ENCODE measurements at regions of chr5 and their contacts with region 1.

Region 1: GRCh38 chr5:72366324-72366976 is 46.3 kb downstream of the PTCD2 start:
- DNase-seq: peak; percentile 72 to 76
- H3K4me3 ChIP-seq: no peak overlapping the region
- H3K27ac ChIP-seq: 0 out of 2 replicates have a peak overlapping the region, but pooled peaks have one; percentile 6
- H3K4me1 ChIP-seq: peaks cover 24% of the 10 kb centered on the region
- H3K27me3 ChIP-seq: no peaks in the 10 kb centered on the region
- CTCF ChIP-seq: peak; percentile 84

Region 2: GRCh38 chr5:72307968-72308852 is 58.2 kb before region 1 on chr5:
- CTCF ChIA-PET with region 1: no interaction called
- POLR2A ChIA-PET with region 1: no interaction called
- intact Hi-C with region 1: no loop called
- DNase-seq: peak; percentile 93 to 97
- H3K4me3 ChIP-seq: peak overlapping the region; percentile 73
- H3K27ac ChIP-seq: peak overlapping the region; percentile 86
- H3K4me1 ChIP-seq: peaks cover 13% of the 10 kb centered on the region
- H3K27me3 ChIP-seq: no peaks in the 10 kb centered on the region
- CTCF ChIP-seq: peak; percentile 77

Region 3: DNA sequence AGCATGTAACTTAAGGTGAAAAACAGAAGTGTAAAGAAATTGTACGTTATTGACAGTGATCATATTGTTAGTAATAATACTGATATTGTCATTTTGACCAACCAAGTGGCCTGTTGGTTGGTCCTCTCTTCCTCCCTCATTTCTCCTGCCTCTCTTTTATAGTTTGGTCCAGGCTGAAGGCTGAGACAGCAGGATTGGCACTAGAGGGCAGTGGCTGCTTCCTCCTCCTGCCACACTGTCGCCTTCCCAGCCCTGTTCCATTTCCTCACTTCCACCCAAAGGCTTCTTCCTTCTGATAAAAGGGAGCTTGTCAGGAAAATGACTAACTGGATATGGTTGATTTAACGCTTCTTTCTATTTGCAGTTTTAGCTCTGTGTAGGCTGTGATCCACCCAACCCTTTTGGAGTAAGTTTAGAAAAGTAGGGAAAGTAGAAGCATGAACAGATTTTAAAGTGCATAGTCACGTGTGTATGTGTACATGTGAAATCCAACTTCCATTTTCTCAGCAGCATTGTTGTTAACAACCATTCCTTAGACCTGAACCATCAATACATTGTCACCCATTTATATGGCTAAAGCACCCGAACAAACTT is 10.6 kb before region 1 on chr5:
- CTCF ChIA-PET with region 1: interaction called, 5 read pairs
- POLR2A ChIA-PET with region 1: interaction called, 11 read pairs
- intact Hi-C with region 1: no loop called
- DNase-seq: no peak
- H3K4me3 ChIP-seq: no peak overlapping the region
- H3K27ac ChIP-seq: no peak overlapping the region
- H3K4me1 ChIP-seq: no peaks in the 10 kb centered on the region
- H3K27me3 ChIP-seq: no peaks in the 10 kb centered on the region
- CTCF ChIP-seq: peak; percentile 50

Region 4: DNA sequence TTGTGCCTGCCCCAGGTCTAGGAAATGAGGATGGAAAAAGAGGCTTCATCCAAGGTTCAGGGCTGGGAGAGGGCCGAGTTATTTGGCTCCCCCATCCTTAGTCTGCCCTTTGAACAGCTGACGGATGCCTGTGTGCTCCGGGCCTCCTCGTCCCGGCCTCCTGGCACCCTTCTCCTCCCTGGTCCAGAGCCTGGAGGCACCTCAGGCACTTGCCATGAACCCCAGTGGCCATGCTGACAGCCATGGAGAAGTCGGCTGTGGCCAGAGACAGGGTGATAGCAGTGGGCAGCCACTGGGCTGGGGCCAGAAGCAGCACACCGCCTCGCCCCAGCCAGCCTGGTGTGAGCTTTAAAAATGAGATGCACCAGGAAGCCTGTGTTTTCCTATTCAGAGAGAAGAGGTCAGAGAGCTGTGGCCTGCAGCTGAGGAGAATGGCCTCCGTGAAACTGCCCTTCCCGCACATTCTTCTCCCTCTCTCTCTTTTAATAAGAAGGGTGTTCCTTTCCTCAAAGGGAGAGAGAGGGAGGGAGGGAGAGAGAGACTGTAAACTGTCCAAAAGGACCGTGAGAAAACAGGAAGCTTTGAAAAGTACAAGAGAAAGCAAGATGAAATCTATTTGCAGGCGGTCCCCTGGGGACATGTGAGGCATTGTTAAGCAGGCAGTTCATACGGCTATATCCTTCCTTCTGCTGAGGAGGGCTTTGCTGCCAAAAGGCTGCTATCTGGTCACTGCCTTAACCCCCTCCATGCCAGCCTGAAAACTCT is 85.5 kb after region 1 on chr5:
- CTCF ChIA-PET with region 1: no interaction called
- POLR2A ChIA-PET with region 1: interaction called, 4 read pairs
- intact Hi-C with region 1: loop called (anchors 1 kb)
- DNase-seq: peak; percentile 63 to 77
- H3K4me3 ChIP-seq: no peak overlapping the region
- H3K27ac ChIP-seq: peak overlapping the region; percentile 95
- H3K4me1 ChIP-seq: peaks cover 33% of the 10 kb centered on the region
- H3K27me3 ChIP-seq: no peaks in the 10 kb centered on the region
- CTCF ChIP-seq: no peak

Region 5: DNA sequence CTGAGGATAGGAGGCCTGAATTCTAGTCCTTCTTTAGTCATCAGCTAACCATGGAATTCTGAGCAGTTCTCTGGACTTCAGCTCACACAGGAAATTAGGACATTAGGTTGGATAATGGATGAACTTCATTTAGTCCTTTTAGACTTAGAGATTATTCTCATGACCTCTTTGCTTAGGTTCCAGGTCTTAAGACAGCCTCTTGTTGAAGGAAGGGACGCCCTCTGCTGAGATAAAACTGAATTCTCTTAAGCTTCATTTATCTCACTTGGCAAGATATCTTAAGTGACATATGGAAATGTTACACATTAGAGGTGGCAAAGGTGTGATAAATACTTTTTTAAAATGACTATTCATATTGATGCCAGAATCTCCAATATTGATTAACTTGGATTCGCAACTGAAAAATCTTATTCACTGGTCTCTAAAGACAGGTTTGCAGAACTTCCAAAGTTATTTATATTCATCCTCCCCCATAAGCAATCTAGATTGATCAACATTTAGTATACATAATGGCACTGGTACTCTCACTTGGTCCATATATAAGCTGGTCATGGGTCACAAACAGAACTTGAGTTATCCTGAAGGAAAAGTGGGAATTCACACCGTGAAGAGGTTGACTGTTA is 157.6 kb after region 1 on chr5:
- CTCF ChIA-PET with region 1: interaction called, 6 read pairs
- POLR2A ChIA-PET with region 1: interaction called, 13 read pairs
- intact Hi-C with region 1: loop called (anchors 1 kb)
- DNase-seq: peak in 1 of 2 experiments; percentile 67
- H3K4me3 ChIP-seq: no peak overlapping the region
- H3K27ac ChIP-seq: no peak overlapping the region
- H3K4me1 ChIP-seq: peaks cover 13% of the 10 kb centered on the region
- H3K27me3 ChIP-seq: no peaks in the 10 kb centered on the region
- CTCF ChIP-seq: peak; percentile 76

Region 6: GRCh38 chr5:72847989-72848473 is 481.6 kb after region 1 on chr5:
- CTCF ChIA-PET with region 1: no interaction called
- POLR2A ChIA-PET with region 1: interaction called, 3 read pairs
- intact Hi-C with region 1: loop called (anchors 10 kb)
- DNase-seq: peak; percentile 77 to 85
- H3K4me3 ChIP-seq: peak overlapping the region; percentile 94
- H3K27ac ChIP-seq: peak overlapping the region; percentile 80
- H3K4me1 ChIP-seq: peaks cover 70% of the 10 kb centered on the region
- H3K27me3 ChIP-seq: no peaks in the 10 kb centered on the region
- CTCF ChIP-seq: peak; percentile 54; the same call in 1 of the 2 replicates

Measured in PC-9 (cell line).